Posterior cingulate gyrus (tissue), 11 donors: ENCODE measurements at regions of chr18 and their contacts with region 1.

Region 1: DNA sequence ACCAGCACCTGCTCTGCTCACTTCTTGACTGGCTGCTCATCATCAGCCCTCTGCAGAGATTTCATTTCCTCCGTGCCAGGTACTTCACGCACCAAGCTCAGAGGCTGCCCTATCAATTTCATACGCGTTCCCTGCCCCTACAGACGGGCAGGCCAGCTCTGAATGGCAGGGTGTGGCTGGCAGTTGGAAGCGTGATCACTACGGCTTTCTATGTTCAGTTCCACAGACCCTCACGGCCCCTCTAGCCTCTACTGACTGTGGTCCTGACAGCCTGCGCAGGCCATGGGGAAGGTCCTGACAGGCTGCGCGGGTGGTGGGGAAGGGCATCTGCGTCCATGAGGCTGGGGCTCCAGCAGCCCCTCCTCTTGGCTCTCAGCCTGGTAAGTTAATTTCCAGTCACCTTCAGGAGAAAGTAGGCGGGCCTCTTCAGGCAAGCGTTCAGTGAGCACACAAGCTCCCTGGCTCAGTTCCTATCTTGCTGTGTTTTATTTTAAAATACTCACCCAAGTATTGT is 154.8 kb downstream of the ZNF236 start:
- DNase-seq: peak in 2 of 10 donors; percentile 74 to 82

Region 2: DNA sequence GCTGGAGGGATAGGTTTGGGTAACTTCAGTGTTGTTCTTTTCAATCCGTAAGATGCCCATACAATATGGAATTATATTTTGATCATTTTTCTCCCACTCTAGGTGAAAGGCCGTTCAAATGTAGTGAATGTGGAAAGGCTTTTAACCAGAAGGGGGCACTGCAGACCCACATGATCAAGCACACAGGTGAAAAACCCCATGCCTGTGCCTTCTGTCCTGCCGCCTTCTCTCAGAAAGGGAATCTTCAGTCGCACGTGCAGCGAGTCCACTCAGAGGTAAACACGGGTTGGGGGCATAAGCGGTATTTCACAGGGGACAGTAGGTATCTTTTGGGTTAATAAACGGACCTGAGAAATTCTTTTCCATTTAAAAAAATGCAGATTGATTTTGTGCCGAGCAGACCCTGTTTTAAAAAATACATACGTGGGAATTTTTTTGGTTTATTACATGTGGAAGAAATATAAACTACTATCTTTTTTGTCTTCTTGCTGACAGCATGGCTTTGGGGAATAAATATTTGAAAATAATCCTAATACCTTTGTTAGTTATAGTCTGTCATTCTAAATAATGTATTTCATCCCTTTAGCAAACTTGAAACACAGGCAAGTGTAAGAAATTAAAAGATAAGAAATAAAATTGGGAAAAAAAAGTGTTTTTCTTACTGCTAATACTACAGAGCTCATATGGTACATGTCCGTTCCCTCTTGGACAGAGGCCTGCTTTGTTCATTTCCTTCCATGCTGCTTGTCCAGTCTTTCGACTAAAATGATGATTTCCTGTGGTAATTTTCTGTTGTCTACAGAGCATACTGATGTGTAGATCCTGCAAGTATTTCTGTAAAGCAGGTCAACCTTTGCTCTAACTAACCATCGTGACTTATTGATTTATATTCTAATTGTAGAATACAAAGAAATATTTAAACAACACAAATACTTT is 101.5 kb before region 1 on chr18:
- intact Hi-C with region 1: loop called (anchors 10 kb)
- DNase-seq: peak in 5 of 10 donors; percentile 49 to 85 (median 52)

Region 3: GRCh38 chr18:76928179-76928868 is 48.8 kb before region 1 on chr18:
- intact Hi-C with region 1: loop called (anchors 5 kb)
- DNase-seq: no peak